Colonic mucosa (tissue), 4 donors: ENCODE measurements at regions of chr18 and their contacts with region 1.

Region 1: DNA sequence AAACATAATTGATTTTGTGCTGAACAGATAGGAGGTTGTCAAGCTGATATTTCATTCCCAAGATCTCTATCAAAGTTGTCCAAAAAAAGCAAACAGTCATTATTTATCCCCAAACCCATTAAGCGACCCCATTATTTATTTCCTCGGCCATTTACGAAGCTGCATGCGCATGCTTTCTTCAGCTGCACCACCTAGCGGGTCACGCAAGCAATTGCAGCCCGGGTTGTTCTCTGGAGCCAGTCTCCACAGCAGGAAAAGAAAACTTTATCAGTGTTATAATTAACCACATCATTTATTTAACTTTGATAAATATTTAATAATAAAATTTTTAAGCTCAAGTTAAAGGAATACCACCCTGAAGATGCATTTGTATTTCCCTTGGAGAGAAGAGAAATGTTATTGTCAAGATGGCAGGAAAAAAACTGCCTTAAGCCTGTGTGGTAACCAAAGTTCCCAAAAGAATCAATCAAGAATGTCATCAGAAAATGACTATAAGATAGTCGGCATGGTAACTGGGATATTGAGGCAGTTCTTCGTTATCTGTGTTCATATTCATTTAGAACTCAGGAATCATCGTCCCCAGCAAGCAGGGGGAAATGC is 304.7 kb downstream of the FBXO15 start:
- DNase-seq: peak; percentile 30
- H3K4me3 ChIP-seq: no peak overlapping the region
- H3K27ac ChIP-seq: no peak overlapping the region
- H3K4me1 ChIP-seq: no peaks in the 10 kb centered on the region
- H3K27me3 ChIP-seq: no peaks in the 10 kb centered on the region
- CTCF ChIP-seq: peak; percentile 96

Region 2: GRCh38 chr18:72762515-72763122 is 1080.3 kb before region 1 on chr18:
- intact Hi-C with region 1: loop called (anchors 5 kb)
- DNase-seq: no peak
- H3K4me3 ChIP-seq: no peak overlapping the region
- H3K27ac ChIP-seq: no peak overlapping the region
- H3K4me1 ChIP-seq: no peaks in the 10 kb centered on the region
- H3K27me3 ChIP-seq: no peaks in the 10 kb centered on the region
- CTCF ChIP-seq: peak; percentile 81

Region 3: DNA sequence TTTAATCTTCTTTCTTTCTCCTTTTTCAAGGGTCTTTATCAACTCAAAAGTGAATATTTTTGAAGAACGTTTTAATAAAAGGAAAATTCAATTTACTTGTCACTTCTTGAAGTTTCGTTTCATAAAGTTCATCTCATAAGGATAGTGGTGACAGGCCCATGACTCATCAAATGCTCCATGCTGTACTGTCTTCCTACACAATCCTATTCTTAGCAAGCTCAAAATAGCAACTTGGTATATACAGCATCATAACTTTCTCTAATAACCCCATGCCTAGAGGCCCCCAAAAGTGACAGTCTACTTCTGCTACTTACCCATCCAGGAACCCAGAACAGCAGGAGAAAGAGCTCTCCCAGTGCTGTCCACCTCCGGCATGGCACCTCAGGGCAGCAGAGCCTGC is 297.0 kb after region 1 on chr18:
- intact Hi-C with region 1: no loop called
- DNase-seq: no peak
- H3K4me3 ChIP-seq: no peak overlapping the region
- H3K27ac ChIP-seq: no peak overlapping the region
- H3K4me1 ChIP-seq: no peaks in the 10 kb centered on the region
- H3K27me3 ChIP-seq: no peaks in the 10 kb centered on the region
- CTCF ChIP-seq: no peak